Sciatic nerve (tissue), 2 donors: ENCODE measurements at regions of chr1 and their contacts with region 1.

Region 1: GRCh38 chr1:244970661-244971551 is 106.6 kb upstream of the HNRNPU start:
- DNase-seq: peak; percentile 97
- ATAC-seq: peak; percentile 93

Region 2: DNA sequence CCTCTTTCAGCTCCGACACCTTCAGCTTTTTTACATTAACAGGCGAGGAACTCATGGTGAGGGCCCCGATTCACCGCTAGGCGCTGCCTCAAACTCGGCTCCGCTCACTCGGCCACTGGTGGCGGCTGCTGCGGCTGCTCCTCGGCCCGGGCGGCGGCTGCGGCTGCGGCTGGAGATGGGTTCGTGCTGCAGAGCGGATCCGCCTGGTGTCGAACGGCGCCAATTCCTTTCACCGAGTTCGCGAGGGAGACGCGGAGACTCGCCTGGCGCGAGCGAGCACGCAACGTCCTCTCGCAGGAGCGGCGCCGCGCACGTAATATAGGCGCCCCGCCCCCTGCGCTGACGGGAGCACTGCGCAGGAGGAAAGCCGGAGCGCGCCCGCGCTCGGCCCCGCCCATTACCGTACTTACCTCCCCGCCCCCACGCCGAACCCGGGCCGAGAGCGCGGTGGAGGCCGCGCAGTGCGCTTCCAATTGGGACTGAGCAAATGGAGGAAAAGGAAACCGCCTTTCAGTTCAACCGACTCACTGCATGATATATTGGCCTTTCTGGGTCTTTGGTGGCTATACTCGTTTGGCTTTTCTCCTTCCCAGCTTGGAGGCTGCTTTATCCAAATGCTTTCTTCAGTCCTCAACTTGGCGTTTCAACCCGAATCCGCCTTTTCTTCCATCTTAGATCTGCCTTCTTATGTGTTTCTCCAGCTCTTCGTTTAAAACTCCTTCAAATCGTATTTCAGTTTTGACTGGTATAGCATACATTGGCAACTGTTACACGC is 106.5 kb before region 1 on chr1 and contains the start of gene HNRNPU:
- intact Hi-C with region 1: loop called (anchors 5 kb)
- DNase-seq: peak; percentile 98
- ATAC-seq: peak; percentile 98
- total RNA-seq, gene HNRNPU: 318 TPM

Region 3: GRCh38 chr1:246398126-246398820 is 1427.4 kb after region 1 on chr1:
- intact Hi-C with region 1: no loop called
- DNase-seq: no peak
- ATAC-seq: no peak